ENCODE measurements at regions of chr5 and their contacts with region 1.

Region 1: DNA sequence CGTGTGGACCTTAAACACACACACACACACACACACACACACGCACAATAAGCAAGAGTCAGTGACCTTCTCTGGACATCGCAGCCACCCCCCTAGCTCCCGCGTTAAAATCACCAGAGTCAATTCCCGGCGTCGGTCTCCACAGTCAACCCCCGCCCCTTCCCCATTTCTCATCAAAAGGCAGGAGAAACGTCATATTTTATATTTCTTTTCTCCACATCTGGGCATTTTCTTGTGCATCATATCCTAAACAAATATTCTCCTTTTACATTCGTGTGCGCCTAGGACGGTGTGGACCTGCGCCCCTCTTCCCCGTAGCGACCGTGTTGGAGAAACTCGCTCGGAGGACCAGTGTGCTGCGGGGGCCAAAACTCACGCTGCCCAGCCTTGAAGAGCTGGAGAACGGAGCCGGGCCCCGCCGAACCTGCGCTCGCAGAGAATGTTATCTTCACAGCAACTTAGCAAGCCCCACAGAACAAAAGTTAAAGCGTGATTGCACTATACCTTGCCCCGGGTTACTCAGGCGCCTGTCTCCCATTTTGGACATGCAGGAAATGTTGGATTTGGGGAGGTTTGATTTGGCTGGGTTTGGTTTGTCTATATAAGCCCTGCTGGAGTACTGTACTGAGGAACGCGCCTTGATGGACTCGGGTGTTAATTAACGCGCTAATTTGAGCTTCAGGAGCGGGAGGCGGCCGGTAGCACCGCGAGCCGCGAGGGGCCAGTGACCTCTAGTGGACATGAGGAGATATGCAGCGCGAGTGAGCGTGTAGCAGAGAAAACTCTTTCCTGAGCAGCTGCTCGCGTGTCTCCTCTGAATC is 192.4 kb downstream of the MEF2C start:
- DNase-seq: peak; percentile 82

Region 2: GRCh38 chr5:87780831-87781760 is 909.5 kb before region 1 on chr5:
- in situ Hi-C with region 1: loop called (anchors 25 kb)
- DNase-seq: peak; percentile 71

Region 3: GRCh38 chr5:88214655-88215054 is 476.0 kb before region 1 on chr5:
- in situ Hi-C with region 1: no loop called
- DNase-seq: no peak